Endothelial cell of umbilical vein (primary cell): ENCODE measurements at regions of chr13 and their contacts with region 1.

Region 1: GRCh38 chr13:97855570-97856303 is 97.7 kb upstream of the IPO5 start:
- DNase-seq: peak; percentile 78
- H3K4me3 ChIP-seq: no peak overlapping the region
- H3K27ac ChIP-seq: no peak overlapping the region
- H3K4me1 ChIP-seq: no peaks in the 10 kb centered on the region
- H3K27me3 ChIP-seq: no peaks in the 10 kb centered on the region
- CTCF ChIP-seq: peak; percentile 72 to 76
- POLR2A ChIP-seq: no peak

Region 2: DNA sequence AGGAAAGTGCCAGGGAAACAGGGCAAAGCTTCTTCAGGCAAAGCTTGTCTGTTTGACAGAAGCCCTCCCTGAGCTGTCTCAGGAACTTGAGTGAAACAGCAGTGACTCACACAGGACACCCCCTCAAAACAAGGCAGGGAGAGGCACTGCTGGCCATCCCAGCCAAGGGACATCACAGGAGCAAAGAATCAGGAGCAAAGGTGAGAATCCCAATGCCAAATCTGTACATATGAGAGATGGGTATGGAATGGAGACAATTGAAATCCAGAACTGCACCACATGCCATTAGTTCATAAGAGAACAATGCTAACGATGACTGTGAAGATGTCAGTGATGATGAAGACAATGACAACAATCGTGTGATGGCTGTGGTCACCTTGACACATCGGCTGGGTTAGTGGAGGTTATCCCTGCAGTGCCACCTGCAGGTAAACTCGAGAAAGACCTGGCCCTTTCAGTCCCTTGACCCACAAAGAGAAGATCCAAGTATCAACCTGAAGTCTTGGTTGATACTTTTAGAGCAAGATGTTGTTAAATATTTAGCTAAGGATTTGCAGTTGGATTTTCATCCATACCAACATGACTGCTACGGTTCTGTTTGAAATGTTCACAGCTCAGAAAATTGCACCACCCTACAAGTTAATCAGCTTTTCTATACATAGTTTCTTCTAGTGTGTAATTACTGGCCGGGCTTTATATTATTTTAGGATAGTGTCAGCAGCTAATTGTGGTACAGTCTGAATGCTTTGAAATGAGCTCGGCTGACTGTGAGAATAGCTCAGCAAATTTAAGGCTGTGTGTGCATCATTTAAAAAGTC is 55.8 kb after region 1 on chr13:
- CTCF ChIA-PET with region 1: interaction called, 74 read pairs
- POLR2A ChIA-PET with region 1: no interaction called
- dilution Hi-C with region 1: no loop called
- intact Hi-C with region 1: loop called (anchors 1 kb)
- DNase-seq: peak; percentile 14
- H3K4me3 ChIP-seq: no peak overlapping the region
- H3K27ac ChIP-seq: no peak overlapping the region
- H3K4me1 ChIP-seq: no peaks in the 10 kb centered on the region
- H3K27me3 ChIP-seq: no peaks in the 10 kb centered on the region
- CTCF ChIP-seq: peak; percentile 43 to 46
- POLR2A ChIP-seq: no peak

Region 3: DNA sequence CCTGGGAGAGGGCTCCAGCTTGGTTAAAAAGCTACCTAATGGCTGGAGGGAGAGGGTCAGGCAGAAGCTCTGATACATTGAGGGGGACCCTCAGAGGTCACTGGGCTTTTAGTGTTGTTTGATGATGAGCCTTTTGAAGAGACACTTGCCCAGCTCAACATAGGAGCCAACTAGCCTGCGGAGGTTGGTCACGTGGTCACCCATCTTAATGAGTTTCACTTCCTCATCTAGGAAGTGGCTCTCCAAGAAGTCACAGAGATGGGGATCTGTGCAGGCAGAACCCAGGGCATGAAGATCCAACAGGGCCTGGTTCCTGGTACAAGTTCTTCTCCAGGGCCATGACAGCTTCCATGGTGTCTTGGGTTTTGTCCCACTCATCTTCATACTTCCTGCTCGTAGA is 131.1 kb after region 1 on chr13:
- CTCF ChIA-PET with region 1: interaction called, 16 read pairs
- POLR2A ChIA-PET with region 1: no interaction called
- dilution Hi-C with region 1: no loop called
- intact Hi-C with region 1: no loop called
- DNase-seq: no peak
- H3K4me3 ChIP-seq: no peak overlapping the region
- H3K27ac ChIP-seq: no peak overlapping the region
- H3K4me1 ChIP-seq: no peaks in the 10 kb centered on the region
- H3K27me3 ChIP-seq: no peaks in the 10 kb centered on the region
- CTCF ChIP-seq: no peak
- POLR2A ChIP-seq: no peak

Region 4: GRCh38 chr13:98429977-98430736 is 574.4 kb after region 1 on chr13:
- CTCF ChIA-PET with region 1: interaction called, 6 read pairs
- POLR2A ChIA-PET with region 1: no interaction called
- dilution Hi-C with region 1: no loop called
- intact Hi-C with region 1: loop called (anchors 1 kb)
- DNase-seq: no peak
- H3K4me3 ChIP-seq: no peak overlapping the region
- H3K27ac ChIP-seq: no peak overlapping the region
- H3K4me1 ChIP-seq: no peaks in the 10 kb centered on the region
- H3K27me3 ChIP-seq: no peaks in the 10 kb centered on the region
- CTCF ChIP-seq: no peak
- POLR2A ChIP-seq: no peak